Posterior cingulate gyrus (tissue), 11 donors: ENCODE measurements at regions of chr1 and their contacts with region 1.

Region 1: DNA sequence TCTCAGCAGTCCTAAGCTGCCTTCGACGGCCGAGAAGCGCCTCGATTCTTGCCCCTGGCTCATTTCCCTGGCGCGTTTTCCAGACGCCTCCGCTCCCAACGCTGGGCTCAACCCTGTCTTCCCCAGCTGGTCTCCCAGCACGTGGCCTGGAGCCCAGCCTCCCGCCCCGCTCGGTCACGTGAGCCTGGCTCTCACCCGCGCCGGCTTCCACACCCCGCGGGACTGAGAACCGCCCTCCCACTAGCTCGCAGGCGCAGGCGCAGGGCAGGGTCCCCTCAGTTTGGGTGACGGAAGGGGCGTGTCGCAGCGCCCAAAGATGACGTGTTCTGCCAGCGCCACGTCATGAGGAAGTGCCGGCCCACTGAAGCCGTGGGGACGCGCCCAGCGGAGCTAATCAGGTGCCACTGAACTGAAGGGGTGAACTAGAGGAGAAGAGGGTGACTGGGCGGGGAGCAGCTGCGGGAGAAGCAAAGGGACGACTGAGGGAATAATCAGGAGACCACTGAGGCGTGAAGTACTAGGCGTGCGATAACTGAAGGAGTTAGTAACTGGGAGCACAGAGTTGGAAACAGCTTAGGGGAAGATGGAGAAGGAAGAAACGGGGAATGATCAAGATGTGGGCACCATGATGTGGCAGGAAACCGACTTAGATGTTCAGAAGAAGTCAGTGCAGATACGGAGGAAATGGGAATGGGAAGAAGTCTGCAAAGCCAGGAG is at the start of gene DHDDS:
- DNase-seq: peak; percentile 97 to 100 (median 98)

Region 2: GRCh38 chr1:25608488-25609178 is 823.5 kb before region 1 on chr1:
- intact Hi-C with region 1: no loop called
- DNase-seq: peak; percentile 67 to 96 (median 86)

Region 3: GRCh38 chr1:26472901-26473845 is 41.0 kb after region 1 on chr1:
- intact Hi-C with region 1: loop called (anchors 1 kb)
- DNase-seq: peak; percentile 95 to 100 (median 98)